ENCODE measurements at regions of chr3 and their contacts with region 1.

Region 1: GRCh38 chr3:50503504-50504342 is at the start of gene CACNA2D2:
- DNase-seq: peak; percentile 60 to 81 (median 67)
- ATAC-seq: peak; percentile 41 to 86 (median 82)
- H3K4me3 ChIP-seq: peak within 1 kb of the TSS; percentile 37 to 82 (median 60)
- H3K27ac ChIP-seq: peak within 1 kb of the TSS in 10 of 12 donors; percentile 14 to 77 (median 51)
- H3K4me1 ChIP-seq: peaks cover 0 to 17% (median 7%) of the 10 kb centered on the region in 12 donors
- H3K27me3 ChIP-seq: peaks cover 0 to 23% (median 2%) of the 10 kb centered on the region in 9 donors
- CTCF ChIP-seq: peak in 1 of 12 donors; percentile 12
- POLR2A ChIP-seq: peak in 1 of 2 donors; percentile 51
- total RNA-seq, gene CACNA2D2: 0.95 to 3.6 (median 2.7) TPM

Region 2: GRCh38 chr3:50436114-50436674 is 67.5 kb before region 1 on chr3:
- intact Hi-C with region 1: loop called in 1 of 10 experiments (anchors 5 kb)
- DNase-seq: peak; percentile 52 to 84 (median 63)
- ATAC-seq: peak; percentile 76 to 88 (median 83)
- H3K4me3 ChIP-seq: no peak overlapping the region
- H3K27ac ChIP-seq: no peak overlapping the region
- H3K4me1 ChIP-seq: peaks cover 0 to 6% (median 2%) of the 10 kb centered on the region in 12 donors
- H3K27me3 ChIP-seq: no peaks in the 10 kb centered on the region
- CTCF ChIP-seq: peak; percentile 71 to 93 (median 85)
- POLR2A ChIP-seq: no peak

Measured in heart left ventricle (tissue), 16 donors.